Breast epithelium (tissue), 4 donors: ENCODE measurements at regions of chr19 and their contacts with region 1.

Region 1: DNA sequence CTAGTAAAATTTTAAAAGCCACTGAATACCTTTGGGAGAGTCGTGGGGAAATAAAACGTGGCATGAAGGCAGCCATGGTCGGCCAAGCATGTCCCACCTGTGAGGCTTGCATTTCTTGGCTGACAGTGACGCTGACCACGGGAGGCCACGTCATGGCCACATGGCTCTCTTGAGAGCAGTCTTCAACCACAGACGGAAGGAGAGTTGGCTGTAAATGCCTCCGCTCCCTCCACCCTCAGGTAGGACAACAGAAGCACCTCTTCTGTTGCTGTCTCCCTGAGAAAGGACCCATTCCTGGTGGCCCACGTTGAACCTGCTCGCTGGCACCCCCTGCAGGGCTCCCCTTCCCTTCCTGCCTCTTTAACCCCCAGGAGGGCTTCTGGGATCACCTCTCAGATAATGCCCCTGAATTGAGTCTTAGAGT is 10.6 kb upstream of the LRRC25 start:
- DNase-seq: no peak
- H3K4me3 ChIP-seq: no peak overlapping the region
- H3K27ac ChIP-seq: no peak overlapping the region
- H3K4me1 ChIP-seq: no peaks in the 10 kb centered on the region
- H3K27me3 ChIP-seq: no peaks in the 10 kb centered on the region
- CTCF ChIP-seq: peak in 1 of 3 donors; percentile 17
- POLR2A ChIP-seq: no peak

Region 2: DNA sequence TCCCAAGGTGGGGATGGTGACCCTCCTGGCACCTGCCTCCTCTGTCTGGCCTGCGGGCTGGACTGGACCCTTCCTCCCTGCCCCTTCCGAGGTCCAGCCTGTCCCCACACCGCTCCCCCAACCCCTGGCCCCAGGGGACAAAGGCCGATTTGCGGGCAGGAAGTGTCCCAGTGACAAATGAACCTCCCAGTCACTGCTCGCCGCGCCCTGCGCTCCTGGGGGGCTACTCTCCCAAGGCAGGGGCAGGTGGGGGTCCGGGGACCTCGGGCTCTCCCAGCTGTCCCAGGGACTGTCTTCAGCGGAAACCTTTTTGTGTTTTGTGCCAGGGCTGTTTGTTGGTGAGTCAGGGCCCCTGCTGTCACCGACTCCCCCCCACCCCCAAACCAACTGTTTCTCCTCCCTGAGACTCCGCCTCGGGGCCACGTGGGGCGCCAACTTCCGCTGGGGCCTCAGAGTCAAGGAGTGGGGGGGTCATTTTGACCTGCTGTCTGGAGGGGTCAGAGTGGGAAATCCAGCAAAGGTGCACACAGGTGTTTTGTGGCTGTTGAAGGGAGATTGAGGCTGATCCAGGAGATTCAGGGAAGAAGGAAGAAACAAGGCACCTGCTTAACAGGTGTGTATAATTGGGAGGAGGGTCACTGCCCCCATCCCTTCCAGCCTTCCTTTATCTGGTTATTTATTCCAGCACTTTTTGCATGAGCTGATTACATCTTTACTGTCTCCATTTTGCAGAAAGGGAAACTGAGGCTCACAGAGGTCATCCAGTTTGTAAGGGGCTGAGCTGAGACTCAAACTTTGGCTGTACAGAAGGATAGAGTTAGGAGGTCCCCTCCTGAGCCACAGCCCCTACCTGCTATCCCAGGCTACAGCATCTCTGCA is 66.8 kb before region 1 on chr19:
- intact Hi-C with region 1: loop called (anchors 2 kb)
- DNase-seq: peak; percentile 41 to 57
- H3K4me3 ChIP-seq: peak overlapping the region; percentile 77 to 93 (median 91)
- H3K27ac ChIP-seq: peak overlapping the region; percentile 90 to 94
- H3K4me1 ChIP-seq: no peaks in the 10 kb centered on the region
- H3K27me3 ChIP-seq: no peaks in the 10 kb centered on the region
- CTCF ChIP-seq: no peak
- POLR2A ChIP-seq: no peak

Region 3: DNA sequence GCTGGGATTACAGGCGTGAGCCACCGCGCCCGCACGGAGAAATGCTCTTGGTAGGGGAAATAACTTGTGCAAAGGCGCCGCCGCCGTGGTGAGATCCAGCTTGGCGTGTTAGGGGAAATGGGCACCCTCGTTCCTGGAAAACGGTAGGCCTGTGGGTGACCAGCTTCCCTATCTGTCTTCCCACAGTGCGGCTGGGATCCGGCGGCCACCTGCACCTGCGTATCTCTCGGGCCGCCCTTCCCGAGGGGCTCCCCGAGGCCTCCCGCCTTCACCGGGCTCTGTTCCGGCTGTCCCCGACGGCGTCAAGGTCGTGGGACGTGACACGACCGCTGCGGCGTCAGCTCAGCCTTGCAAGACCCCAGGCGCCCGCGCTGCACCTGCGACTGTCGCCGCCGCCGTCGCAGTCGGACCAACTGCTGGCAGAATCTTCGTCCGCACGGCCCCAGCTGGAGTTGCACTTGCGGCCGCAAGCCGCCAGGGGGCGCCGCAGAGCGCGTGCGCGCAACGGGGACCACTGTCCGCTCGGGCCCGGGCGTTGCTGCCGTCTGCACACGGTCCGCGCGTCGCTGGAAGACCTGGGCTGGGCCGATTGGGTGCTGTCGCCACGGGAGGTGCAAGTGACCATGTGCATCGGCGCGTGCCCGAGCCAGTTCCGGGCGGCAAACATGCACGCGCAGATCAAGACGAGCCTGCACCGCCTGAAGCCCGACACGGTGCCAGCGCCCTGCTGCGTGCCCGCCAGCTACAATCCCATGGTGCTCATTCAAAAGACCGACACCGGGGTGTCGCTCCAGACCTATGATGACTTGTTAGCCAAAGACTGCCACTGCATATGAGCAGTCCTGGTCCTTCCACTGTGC is 19.7 kb before region 1 on chr19:
- intact Hi-C with region 1: loop called (anchors 1 kb)
- DNase-seq: peak; percentile 55 to 85
- H3K4me3 ChIP-seq: peak overlapping the region; percentile 43 to 65 (median 46)
- H3K27ac ChIP-seq: peak overlapping the region; percentile 38 to 50
- H3K4me1 ChIP-seq: no peaks in the 10 kb centered on the region
- H3K27me3 ChIP-seq: no peaks in the 10 kb centered on the region
- CTCF ChIP-seq: peak; percentile 99
- POLR2A ChIP-seq: no peak